AG04450 (cell line): ENCODE measurements at regions of chr19 and their contacts with region 1.

Region 1: GRCh38 chr19:11597202-11598102 is at the start of gene ZNF627:
- DNase-seq: peak; percentile 90
- H3K4me3 ChIP-seq: peak within 1 kb of the TSS; percentile 87
- H3K27ac ChIP-seq: peak within 1 kb of the TSS; percentile 88
- H3K27me3 ChIP-seq: no peaks in the 10 kb centered on the region
- CTCF ChIP-seq: 0 out of 2 replicates have a peak, but pooled peaks have one; percentile 11
- polyA plus RNA-seq, gene ZNF627: 15.6 and 20.2 TPM in 2 replicates

Region 2: GRCh38 chr19:10928525-10929401 is 668.7 kb before region 1 on chr19 and contains the starts of genes TIMM29 and YIPF2:
- CTCF ChIA-PET with region 1: no interaction called
- POLR2A ChIA-PET with region 1: interaction called, 16 read pairs
- DNase-seq: peak; percentile 94
- H3K4me3 ChIP-seq: peak within 1 kb of the TSS; percentile 86
- H3K27ac ChIP-seq: peak within 1 kb of the TSS; percentile 31
- H3K27me3 ChIP-seq: no peaks in the 10 kb centered on the region
- CTCF ChIP-seq: no peak
- polyA plus RNA-seq, gene TIMM29: 7.4 and 7.5 TPM in 2 replicates
- polyA plus RNA-seq, gene YIPF2: 35.1 and 56.5 TPM in 2 replicates

Region 3: GRCh38 chr19:11570039-11570462 is 27.4 kb before region 1 on chr19:
- CTCF ChIA-PET with region 1: no interaction called
- POLR2A ChIA-PET with region 1: no interaction called
- DNase-seq: no peak
- H3K4me3 ChIP-seq: no peak overlapping the region
- H3K27ac ChIP-seq: no peak overlapping the region
- H3K27me3 ChIP-seq: no peaks in the 10 kb centered on the region
- CTCF ChIP-seq: no peak